Aorta (tissue), 5 donors: ENCODE measurements at regions of chr1 and their contacts with region 1.

Region 1: GRCh38 chr1:116377541-116378529 is 4.8 kb downstream of the ATP1A1 start:
- DNase-seq: peak; percentile 74 to 82
- ATAC-seq: peak; percentile 75
- H3K4me3 ChIP-seq: no peak overlapping the region
- H3K27ac ChIP-seq: peak overlapping the region; percentile 92 to 94
- H3K4me1 ChIP-seq: peaks cover 0 to 15% of the 10 kb centered on the region in 2 donors
- H3K27me3 ChIP-seq: no peaks in the 10 kb centered on the region

Region 2: GRCh38 chr1:116243333-116244054 is 134.3 kb before region 1 on chr1:
- intact Hi-C with region 1: no loop called
- DNase-seq: no peak
- ATAC-seq: no peak
- H3K4me3 ChIP-seq: no peak overlapping the region
- H3K27ac ChIP-seq: no peak overlapping the region
- H3K4me1 ChIP-seq: no peaks in the 10 kb centered on the region
- H3K27me3 ChIP-seq: no peaks in the 10 kb centered on the region

Region 3: DNA sequence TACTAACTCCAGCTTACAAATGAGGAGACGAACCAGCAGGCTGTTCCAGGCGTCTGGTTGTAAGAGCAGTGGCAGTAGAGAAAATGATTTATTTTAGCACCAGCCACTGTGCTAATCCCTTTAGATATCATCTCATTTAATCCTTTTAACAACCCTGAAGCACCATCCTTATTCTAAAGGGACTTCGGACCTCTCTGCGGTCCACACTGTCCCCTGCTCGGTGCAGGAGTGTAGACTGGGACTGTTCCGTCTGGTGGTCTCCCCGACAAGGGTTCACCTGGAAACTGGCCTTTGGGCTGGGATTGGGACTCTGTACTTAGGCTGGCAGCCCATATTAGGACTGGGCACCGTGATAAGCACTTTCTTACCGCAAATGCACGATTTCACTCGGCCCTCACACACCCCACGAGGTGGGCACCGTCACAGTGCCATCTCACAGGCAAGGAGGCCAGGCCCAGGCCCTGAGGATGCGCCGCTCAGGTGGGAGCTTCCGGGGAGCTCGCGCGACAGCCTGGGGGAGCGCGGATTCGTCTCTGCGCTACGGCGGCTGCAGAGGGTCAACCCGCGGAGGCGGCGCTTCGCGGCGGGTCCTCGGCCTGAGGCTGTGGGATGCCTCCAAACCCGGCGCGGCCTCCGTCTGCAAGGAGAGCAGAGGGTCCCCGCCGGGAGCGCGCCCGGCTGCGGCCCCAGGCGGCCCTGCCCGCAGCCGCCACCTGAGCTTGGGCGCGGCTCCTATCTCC is 40.4 kb after region 1 on chr1:
- intact Hi-C with region 1: loop called in 1 of 2 experiments (anchors 5 kb)
- DNase-seq: peak; percentile 89 to 94
- ATAC-seq: peak; percentile 96
- H3K4me3 ChIP-seq: peak overlapping the region; percentile 73 to 84
- H3K27ac ChIP-seq: no peak overlapping the region
- H3K4me1 ChIP-seq: no peaks in the 10 kb centered on the region
- H3K27me3 ChIP-seq: no peaks in the 10 kb centered on the region

Region 4: GRCh38 chr1:116435806-116436610 is 58.2 kb after region 1 on chr1:
- intact Hi-C with region 1: loop called in 1 of 2 experiments (anchors 5 kb)
- DNase-seq: no peak
- ATAC-seq: no peak
- H3K4me3 ChIP-seq: no peak overlapping the region
- H3K27ac ChIP-seq: no peak overlapping the region
- H3K4me1 ChIP-seq: no peaks in the 10 kb centered on the region
- H3K27me3 ChIP-seq: no peaks in the 10 kb centered on the region

Region 5: GRCh38 chr1:117036018-117036461 is 658.2 kb after region 1 on chr1:
- intact Hi-C with region 1: no loop called
- DNase-seq: no peak
- ATAC-seq: no peak
- H3K4me3 ChIP-seq: no peak overlapping the region
- H3K27ac ChIP-seq: no peak overlapping the region
- H3K4me1 ChIP-seq: no peaks in the 10 kb centered on the region
- H3K27me3 ChIP-seq: no peaks in the 10 kb centered on the region